ENCODE measurements at regions of chr2 and their contacts with region 1.

Region 1: GRCh38 chr2:11124503-11125068 is 30.7 kb upstream of the SLC66A3 start:
- DNase-seq: peak; percentile 56 to 89 (median 76)

Region 2: DNA sequence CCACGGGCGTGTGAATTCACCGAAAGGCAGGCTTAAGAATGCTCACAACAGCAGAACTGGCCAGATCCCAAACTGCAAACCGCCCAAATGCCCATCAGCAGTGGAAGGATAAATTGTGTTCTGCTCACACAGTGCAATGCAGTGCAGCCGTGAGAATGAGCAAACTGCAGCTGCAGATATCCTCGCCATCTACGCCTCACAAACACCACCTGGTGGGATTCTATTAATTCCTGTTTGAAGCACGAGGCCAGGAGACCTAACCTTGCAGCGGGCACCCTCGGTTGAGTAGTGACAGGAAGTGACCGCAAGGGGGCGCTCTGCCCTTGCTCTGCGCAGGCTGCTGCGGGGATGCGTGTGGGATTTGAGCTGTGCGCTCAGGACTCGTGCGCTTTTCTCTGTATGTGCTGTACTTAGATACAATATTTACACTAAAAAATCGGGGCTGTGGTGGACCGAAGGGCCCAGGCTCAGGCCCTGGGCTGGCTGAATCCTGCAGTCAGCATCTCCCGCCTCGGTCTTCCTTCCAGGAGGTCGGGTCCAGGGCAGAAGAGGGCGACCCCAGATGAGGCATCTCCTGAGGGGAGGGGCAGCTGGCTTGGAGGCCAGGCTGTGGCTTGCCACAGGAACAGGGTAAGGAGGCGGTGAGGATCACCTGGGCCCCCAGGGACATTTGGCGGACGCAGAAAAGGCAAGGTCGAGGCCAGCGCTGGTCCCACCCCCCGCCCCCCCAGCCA is 292.2 kb before region 1 on chr2:
- intact Hi-C with region 1: loop called (anchors 2 kb)
- DNase-seq: peak; percentile 76 to 94 (median 88)

Region 3: GRCh38 chr2:10911261-10912075 is 213.1 kb before region 1 on chr2 and contains the start of gene KCNF1:
- intact Hi-C with region 1: loop called (anchors 10 kb)
- DNase-seq: peak in 17 of 42 donors; percentile 19 to 78 (median 57)

Region 4: GRCh38 chr2:11155381-11156035 is 30.9 kb after region 1 on chr2 and contains the start of gene SLC66A3:
- intact Hi-C with region 1: no loop called
- DNase-seq: peak in 2 of 42 donors; percentile 23 to 45